Activated CD4-positive, alpha-beta memory T cell treated with anti-CD3 and anti-CD28 coated beads for 36 hours (primary cell): ENCODE measurements at regions of chr6 and their contacts with region 1.

Region 1: GRCh38 chr6:138428944-138429598 is 25.0 kb downstream of the HEBP2 start:
- DNase-seq: no peak
- H3K4me3 Mint-ChIP-seq: no peak overlapping the region
- H3K27ac Mint-ChIP-seq: no peak overlapping the region
- H3K4me1 Mint-ChIP-seq: no peaks in the 10 kb centered on the region
- H3K27me3 Mint-ChIP-seq: no peaks in the 10 kb centered on the region

Region 2: DNA sequence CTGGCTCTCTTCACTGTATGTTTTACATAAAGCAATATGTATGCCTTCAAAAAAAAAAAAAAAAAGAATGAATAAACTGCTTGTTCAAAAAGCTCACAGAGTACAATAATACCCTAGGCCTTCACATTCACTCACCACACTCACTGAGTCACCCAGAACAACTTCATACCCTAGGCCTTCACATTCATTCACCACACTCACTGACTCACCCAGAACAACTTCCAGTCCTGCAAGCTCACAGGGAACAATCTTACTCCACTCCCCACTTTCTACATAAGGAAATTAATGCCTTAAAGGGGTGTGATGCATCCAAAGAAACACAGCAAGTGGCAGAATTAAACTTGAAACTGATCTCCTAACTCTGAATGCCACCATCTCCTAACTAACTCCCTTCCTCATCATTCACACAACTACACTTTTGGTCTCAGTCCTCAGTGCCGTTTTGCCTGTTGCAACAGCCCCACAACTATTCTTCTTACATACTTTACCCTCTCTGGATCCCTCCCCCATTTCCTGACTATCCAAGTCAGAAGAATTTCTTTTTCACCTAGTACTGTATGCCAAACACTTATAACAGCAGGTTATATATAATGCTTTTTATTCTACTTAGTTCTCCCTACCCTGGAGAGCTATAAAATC is 36.1 kb after region 1 on chr6:
- CTCF ChIA-PET with region 1: no interaction called
- POLR2A ChIA-PET with region 1: no interaction called
- intact Hi-C with region 1: loop called (anchors 5 kb)
- DNase-seq: peak; percentile 28
- H3K4me3 Mint-ChIP-seq: no peak overlapping the region
- H3K27ac Mint-ChIP-seq: no peak overlapping the region
- H3K4me1 Mint-ChIP-seq: peaks cover 5% of the 10 kb centered on the region
- H3K27me3 Mint-ChIP-seq: peaks cover 1% of the 10 kb centered on the region

Region 3: GRCh38 chr6:138517635-138518034 is 88.6 kb after region 1 on chr6:
- CTCF ChIA-PET with region 1: interaction called, 123 read pairs
- POLR2A ChIA-PET with region 1: no interaction called
- intact Hi-C with region 1: loop called (anchors 1 kb)
- DNase-seq: peak; percentile 61
- H3K4me3 Mint-ChIP-seq: no peak overlapping the region
- H3K27ac Mint-ChIP-seq: no peak overlapping the region
- H3K4me1 Mint-ChIP-seq: peaks cover 7% of the 10 kb centered on the region
- H3K27me3 Mint-ChIP-seq: peaks cover 9% of the 10 kb centered on the region